B cell (primary cell): ENCODE measurements at regions of chr3 and their contacts with region 1.

Region 1: DNA sequence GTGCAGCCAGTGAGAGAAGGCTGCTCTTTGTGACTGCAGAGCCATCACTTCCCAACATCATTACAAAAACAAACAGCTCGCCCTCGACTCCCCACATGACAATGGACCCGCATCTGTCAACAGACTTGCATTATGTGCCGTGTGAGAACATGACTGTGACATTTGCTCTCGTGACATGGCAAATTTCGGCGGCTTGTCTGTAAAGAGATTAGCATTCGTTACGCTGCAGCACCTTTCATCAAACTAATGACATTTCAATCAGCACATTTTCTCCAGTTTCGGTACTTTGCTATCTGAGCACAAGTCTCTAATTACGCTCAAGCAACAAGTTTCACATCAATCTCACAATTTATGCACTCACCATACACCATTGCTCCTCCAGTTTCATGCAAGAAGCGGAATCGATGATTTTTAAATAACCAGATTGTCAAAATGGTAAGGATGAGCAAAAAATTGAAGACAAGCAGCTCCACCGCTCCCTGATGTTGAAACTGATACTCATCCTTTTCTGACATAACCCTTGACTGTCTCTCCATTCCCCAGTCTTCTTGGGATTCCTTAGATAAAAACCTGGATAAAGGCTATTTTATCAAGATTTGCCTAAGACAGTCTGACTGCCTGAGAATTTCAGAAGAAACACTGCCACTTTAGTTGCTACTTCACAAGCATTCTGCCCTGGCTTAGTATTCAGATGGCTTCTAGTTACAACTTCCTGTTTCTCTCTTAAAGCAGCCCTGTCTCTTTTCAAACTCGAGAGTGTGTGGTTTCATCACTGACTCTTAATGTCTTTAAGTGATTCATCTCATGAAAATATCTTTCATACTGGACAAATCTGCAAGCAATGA is at the start of gene SLC9A9:
- DNase-seq: peak; percentile 61
- ATAC-seq: peak; percentile 85
- H3K4me3 ChIP-seq: peak within 1 kb of the TSS; percentile 60 to 99 (median 95)
- H3K4me3 Mint-ChIP-seq: peak within 1 kb of the TSS; percentile 99
- H3K27ac ChIP-seq: peak within 1 kb of the TSS; percentile 27 to 86
- H3K27ac Mint-ChIP-seq: peak within 1 kb of the TSS; percentile 95
- H3K4me1 ChIP-seq: peaks cover 8 to 15% of the 10 kb centered on the region in 2 donors
- H3K4me1 Mint-ChIP-seq: peaks cover 51% of the 10 kb centered on the region
- H3K27me3 ChIP-seq: no peaks in the 10 kb centered on the region
- H3K27me3 Mint-ChIP-seq: no peaks in the 10 kb centered on the region
- CTCF ChIP-seq: no peak
- total RNA-seq, gene SLC9A9: 17.3 and 18.7 TPM in 2 replicates

Region 2: DNA sequence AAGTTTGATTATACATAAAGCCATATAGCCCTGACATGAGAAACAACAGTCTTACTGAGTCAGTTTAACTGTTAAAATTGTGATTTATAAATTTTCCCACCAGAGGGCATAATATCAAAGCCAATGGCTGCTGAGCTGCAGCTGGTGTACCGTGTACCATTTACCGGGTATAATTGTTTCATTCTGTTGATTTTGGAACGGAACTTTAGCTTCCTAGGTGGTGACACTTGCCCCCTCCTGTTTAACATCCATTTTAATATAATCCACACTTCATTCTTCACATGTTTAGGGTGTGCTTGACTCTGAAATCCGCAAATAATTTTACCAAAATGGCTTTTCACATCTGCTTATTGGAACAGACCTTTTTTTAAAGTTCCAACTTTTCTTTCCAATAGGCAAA is 72.5 kb before region 1 on chr3:
- CTCF ChIA-PET with region 1: interaction called, 4 read pairs
- POLR2A ChIA-PET with region 1: no interaction called
- intact Hi-C with region 1: loop called (anchors 2 kb)
- DNase-seq: peak; percentile 47
- ATAC-seq: peak; percentile 72
- H3K4me3 ChIP-seq: no peak overlapping the region
- H3K4me3 Mint-ChIP-seq: no peak overlapping the region
- H3K27ac ChIP-seq: no peak overlapping the region
- H3K27ac Mint-ChIP-seq: no peak overlapping the region
- H3K4me1 ChIP-seq: peaks cover 0 to 5% of the 10 kb centered on the region in 2 donors
- H3K4me1 Mint-ChIP-seq: peaks cover 4% of the 10 kb centered on the region
- H3K27me3 ChIP-seq: no peaks in the 10 kb centered on the region
- H3K27me3 Mint-ChIP-seq: no peaks in the 10 kb centered on the region
- CTCF ChIP-seq: peak; percentile 71